MCF 10A (cell line): ENCODE measurements at regions of chr9 and their contacts with region 1.

Region 1: DNA sequence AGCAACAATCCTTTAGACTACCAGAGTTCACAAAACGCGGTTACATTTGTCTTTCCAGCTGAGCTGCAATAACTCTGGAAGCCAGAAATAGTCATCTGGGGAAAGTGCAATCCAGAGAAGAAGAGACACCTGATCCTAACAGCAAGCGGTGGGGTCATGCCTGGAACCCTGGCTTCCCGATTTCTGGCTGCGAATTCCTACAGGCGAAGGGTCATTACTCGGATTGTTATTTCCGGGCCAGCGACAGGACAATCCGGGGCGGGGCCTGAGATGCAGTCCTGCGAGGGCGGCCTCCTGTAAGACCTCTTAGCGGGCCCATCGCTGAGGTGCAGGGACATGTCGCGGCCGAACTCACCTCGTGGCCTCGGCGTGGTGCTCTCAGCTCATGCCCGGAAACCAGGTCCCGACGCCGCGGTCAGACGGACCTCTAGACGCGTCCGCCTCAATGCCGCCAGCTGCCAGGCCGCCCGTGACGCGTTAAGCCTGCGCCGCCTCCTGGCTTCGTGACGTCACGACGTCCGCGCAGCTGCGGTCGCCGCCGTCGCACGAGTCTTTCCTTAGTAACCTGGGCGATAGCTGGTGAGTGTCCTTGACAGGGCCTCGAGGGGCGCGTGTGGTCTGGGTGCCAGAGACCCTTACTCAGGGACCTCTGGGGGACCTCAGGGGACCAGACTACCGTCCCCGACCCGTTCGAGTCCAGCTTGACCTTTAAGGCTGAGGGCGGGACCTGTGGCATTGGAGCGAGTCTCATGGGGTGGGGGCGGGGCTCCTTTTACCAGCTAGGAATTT is at the starts of genes MRRF and RBM18:
- DNase-seq: peak; percentile 89
- H3K4me3 Mint-ChIP-seq: peak within 1 kb of the TSS; percentile 97
- H3K27ac Mint-ChIP-seq: peak within 1 kb of the TSS; percentile 100
- H3K4me1 Mint-ChIP-seq: peaks cover 12% of the 10 kb centered on the region
- H3K27me3 Mint-ChIP-seq: no peaks in the 10 kb centered on the region
- CTCF ChIP-seq: no peak
- total RNA-seq, gene MRRF: 73.0 and 90.3 TPM in 2 replicates
- total RNA-seq, gene RBM18: 39.9 and 44.4 TPM in 2 replicates

Region 2: DNA sequence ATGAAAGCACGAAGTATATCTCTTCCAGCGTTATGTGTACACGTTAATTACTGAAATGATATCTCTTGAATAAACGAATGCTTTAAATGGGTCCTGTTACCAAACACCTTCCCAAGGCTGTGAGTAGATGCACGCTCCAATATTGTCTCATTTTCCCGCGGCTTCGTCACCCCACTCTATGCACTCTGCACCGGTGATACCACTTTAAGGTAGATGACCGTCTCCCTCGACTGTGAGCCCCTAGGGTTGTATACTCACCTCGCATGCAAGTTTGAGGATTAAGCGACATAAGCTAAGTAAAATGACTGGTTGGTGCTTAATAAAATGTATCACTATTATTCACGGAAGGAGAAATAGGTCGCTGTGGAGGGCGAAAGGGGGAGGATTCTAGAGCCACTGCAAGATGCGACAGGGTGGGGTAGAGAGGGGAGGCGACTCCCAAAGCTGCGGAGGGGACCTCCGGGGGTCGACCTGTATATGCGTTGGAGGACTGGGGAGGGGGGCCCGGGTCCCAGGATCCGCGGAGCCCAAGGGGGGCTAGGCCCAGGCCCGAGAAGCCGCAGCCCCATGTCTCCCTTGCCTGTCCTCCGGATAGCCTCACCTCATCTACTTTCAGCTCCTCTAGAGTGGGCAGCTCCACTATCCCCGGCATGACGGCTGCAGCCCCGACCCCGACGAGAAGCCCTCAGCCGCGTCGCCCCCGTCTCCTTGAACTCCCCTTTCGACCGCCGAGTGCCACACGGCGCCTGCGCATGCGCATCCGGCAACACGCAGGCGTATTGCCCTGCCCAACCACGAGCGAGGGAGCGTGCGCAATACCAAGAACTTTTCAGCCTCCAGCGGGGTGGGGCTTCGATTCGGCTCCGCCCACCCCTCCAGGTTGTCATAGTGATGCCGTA is 105.3 kb before region 1 on chr9 and contains the starts of genes MORN5 and NDUFA8:
- CTCF ChIA-PET with region 1: interaction called, 11 read pairs
- POLR2A ChIA-PET with region 1: interaction called, 37 read pairs
- intact Hi-C with region 1: loop called (anchors 1 kb)
- DNase-seq: peak; percentile 95
- H3K4me3 Mint-ChIP-seq: peak within 1 kb of the TSS; percentile 100
- H3K27ac Mint-ChIP-seq: peak within 1 kb of the TSS; percentile 96
- H3K4me1 Mint-ChIP-seq: peaks cover 34% of the 10 kb centered on the region
- H3K27me3 Mint-ChIP-seq: peaks cover 15% of the 10 kb centered on the region
- CTCF ChIP-seq: no peak
- total RNA-seq, gene MORN5: not detected in 2 replicates
- total RNA-seq, gene NDUFA8: 52.5 and 58.4 TPM in 2 replicates

Region 3: DNA sequence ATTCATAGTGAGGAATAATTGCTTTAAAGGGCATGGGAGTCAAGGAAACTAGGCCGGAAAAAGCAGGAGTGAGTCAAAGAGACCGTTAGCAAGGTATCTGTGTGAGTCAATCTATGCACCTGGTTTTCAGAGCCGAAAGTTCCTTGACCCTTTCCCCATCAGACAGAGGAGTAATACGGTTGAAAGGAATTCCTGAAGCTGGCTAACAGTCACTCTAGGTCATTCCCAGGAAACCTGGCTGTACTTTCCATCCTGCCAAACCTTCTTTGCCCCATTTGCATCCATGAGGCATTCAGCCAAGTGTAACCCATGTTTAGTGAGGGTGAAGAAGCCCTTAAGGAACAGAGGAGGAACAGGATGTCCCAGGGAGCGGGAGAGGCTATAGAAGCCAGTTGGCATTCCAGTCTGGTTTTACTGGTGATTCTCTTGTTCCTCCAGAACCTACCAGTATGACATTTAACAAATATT is 16.1 kb before region 1 on chr9:
- CTCF ChIA-PET with region 1: interaction called, 7 read pairs
- POLR2A ChIA-PET with region 1: interaction called, 72 read pairs
- intact Hi-C with region 1: no loop called
- DNase-seq: peak; percentile 91
- H3K4me3 Mint-ChIP-seq: peak overlapping the region; percentile 62
- H3K27ac Mint-ChIP-seq: peak overlapping the region; percentile 91
- H3K4me1 Mint-ChIP-seq: peaks cover 19% of the 10 kb centered on the region
- H3K27me3 Mint-ChIP-seq: no peaks in the 10 kb centered on the region
- CTCF ChIP-seq: no peak

Region 4: DNA sequence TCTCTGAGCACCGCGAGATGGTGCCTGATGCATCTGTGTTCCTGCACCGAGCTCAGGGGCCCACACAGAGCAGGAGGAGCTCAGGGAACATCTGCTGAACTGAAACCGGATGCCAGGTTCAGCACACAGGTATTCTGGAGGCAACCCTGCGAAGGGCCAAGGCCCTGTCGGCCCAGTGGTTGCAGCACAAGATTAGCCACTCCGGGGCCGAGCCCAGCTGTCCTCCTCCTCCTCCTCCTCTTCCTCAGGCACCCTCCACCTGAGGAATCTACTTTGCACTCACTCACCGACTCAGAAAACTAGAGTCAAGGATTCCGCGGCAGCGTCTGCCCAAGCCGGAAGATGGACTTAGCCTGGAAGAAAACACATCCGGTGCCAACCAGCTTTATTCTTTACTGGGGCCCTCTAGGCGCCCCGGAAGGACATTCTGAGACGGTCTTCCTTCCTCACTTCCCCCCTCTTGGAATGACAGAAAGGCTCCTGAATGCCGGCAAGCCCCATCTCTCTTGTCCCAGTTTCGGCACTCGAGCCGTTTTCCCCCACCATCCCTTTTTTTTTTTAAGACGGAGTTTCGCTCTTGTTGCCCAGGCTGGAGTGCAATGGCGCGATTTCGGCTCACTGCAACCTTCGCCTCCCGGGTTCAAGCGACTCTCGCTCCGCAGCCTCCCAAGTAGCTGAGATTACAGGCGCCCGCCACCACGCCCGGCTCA is 648.6 kb after region 1 on chr9 and contains the start of gene ZBTB6:
- CTCF ChIA-PET with region 1: no interaction called
- POLR2A ChIA-PET with region 1: interaction called, 10 read pairs
- intact Hi-C with region 1: no loop called
- DNase-seq: peak; percentile 89
- H3K4me3 Mint-ChIP-seq: peak within 1 kb of the TSS; percentile 97
- H3K27ac Mint-ChIP-seq: peak within 1 kb of the TSS; percentile 94
- H3K4me1 Mint-ChIP-seq: peaks cover 17% of the 10 kb centered on the region
- H3K27me3 Mint-ChIP-seq: no peaks in the 10 kb centered on the region
- CTCF ChIP-seq: no peak
- total RNA-seq, gene ZBTB6: 8.5 and 10.4 TPM in 2 replicates